ENCODE measurements at regions of chr3 and their contacts with region 1.

Region 1: GRCh38 chr3:32374788-32375595 is 16.7 kb upstream of the CMTM7 start:
- DNase-seq: peak; percentile 67
- H3K4me3 Mint-ChIP-seq: no peak overlapping the region
- H3K27ac Mint-ChIP-seq: no peak overlapping the region
- H3K4me1 Mint-ChIP-seq: peaks cover 19% of the 10 kb centered on the region
- H3K27me3 Mint-ChIP-seq: peaks cover 3% of the 10 kb centered on the region

Region 2: DNA sequence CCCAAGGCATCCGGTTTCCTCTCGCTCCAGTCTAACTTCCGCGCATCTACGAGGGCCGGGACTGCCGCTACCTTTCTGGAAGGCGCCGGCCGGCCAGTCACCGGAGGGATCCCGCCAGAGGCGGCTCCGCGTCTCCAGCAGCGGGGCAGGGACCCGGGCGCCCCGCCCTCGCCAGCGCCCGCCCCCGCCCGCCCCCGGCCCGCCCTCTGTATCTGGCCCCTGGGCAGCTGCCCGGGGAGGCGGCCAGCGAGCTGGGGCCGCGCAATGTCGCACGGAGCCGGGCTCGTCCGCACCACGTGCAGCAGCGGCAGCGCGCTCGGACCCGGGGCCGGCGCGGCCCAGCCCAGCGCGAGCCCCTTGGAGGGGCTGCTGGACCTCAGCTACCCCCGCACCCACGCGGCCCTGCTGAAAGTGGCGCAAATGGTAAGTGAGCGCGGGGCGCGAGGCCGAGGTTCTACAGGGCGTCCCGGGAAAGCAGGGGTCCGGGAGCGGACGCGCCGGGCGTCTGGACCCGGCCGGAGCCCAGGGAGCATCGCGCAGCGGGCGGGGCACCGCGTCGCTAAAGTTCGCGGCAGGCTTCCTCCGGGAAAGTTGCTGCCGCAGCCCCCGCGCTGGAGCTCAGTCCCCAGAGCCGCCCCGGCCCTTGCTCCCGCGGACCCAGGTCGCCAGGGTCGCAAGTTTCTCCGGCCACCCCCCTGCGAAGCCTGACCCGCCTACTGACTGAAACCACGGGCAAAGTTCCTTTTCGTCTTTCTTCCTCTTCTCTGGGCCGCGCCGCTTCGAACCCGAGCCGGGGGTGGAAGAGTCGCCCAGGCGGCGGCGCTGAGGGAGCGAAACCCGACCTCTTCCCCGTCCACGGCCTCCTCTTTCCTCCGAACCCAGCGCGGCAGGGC is 16.9 kb after region 1 on chr3 and contains the start of gene CMTM7:
- CTCF ChIA-PET with region 1: interaction called, 45 read pairs
- POLR2A ChIA-PET with region 1: interaction called, 7 read pairs
- DNase-seq: peak; percentile 74
- H3K4me3 Mint-ChIP-seq: peak within 1 kb of the TSS; percentile 97
- H3K27ac Mint-ChIP-seq: peak within 1 kb of the TSS; percentile 90
- H3K4me1 Mint-ChIP-seq: peaks cover 52% of the 10 kb centered on the region
- H3K27me3 Mint-ChIP-seq: no peaks in the 10 kb centered on the region
- total RNA-seq, gene CMTM7: 47.0 to 47.3 TPM

Region 3: DNA sequence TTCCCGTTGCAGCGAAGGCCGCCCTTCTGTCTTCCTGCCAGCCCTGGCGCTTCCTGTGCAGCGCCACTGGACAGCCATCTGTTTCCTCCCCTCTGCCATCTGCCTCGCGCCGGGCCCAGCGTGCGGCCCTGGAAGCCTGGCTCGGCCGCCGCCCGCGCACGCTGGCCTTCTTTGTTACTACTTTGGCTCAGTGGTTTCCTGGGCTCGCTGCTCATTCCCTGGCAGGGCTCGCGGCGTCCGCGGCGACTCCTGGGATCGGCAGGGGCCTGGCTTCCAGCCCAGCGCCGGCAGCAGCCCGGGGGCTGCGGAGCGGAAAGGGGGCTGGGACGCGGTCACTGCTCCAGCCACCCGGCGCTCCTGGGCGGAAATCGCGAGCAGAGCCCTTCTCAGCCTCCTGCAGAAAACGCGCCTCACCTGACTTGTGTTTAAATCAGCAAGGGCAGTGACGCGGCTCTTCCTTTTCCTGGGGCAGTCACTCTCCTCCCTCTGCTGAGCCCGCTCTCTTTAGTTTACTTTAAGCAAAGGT is 26.6 kb after region 1 on chr3:
- CTCF ChIA-PET with region 1: interaction called, 45 read pairs
- POLR2A ChIA-PET with region 1: interaction called, 3 read pairs
- DNase-seq: peak; percentile 71
- H3K4me3 Mint-ChIP-seq: peak overlapping the region; percentile 78
- H3K27ac Mint-ChIP-seq: peak overlapping the region; percentile 96
- H3K4me1 Mint-ChIP-seq: peaks cover 58% of the 10 kb centered on the region
- H3K27me3 Mint-ChIP-seq: no peaks in the 10 kb centered on the region

Measured in activated CD4-positive, alpha-beta memory T cell treated with anti-CD3 and anti-CD28 coated beads, Interleukin-2, amount 10 ng/mL, durations not matched to agents 7 days and 5 days (primary cell).